ENCODE measurements at regions of chr16 and their contacts with region 1.

Region 1: DNA sequence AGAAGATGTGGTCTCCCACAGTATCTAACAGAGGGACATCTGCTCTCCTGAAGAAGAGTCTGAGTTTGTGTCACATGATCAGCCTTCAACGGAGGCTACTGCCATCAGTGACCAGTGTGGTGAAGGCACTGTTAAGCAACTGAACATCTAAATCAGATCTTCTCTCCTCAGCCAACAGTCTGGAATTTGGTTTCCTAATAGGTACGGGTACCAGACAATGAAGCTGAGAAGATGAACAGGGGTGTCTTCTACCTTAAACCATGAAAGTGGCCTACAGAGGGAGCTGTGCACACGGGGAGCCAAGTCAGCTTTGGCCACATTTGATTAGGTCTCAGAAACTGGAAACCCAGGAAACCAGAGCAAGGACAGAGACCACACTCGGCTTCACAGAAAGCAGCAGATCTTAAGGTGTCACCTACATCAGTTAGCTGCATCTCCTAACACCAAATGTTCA is 41.8 kb downstream of the BRD7 start:
- DNase-seq: peak; percentile 54
- H3K4me3 Mint-ChIP-seq: no peak overlapping the region
- H3K27ac Mint-ChIP-seq: no peak overlapping the region
- H3K4me1 Mint-ChIP-seq: no peaks in the 10 kb centered on the region
- H3K27me3 Mint-ChIP-seq: no peaks in the 10 kb centered on the region
- CTCF ChIP-seq: peak; percentile 29

Region 2: GRCh38 chr16:50185005-50185505 is 141.9 kb before region 1 on chr16:
- CTCF ChIA-PET with region 1: no interaction called
- POLR2A ChIA-PET with region 1: no interaction called
- intact Hi-C with region 1: no loop called
- DNase-seq: no peak
- H3K4me3 Mint-ChIP-seq: no peak overlapping the region
- H3K27ac Mint-ChIP-seq: no peak overlapping the region
- H3K4me1 Mint-ChIP-seq: peaks cover 27% of the 10 kb centered on the region
- H3K27me3 Mint-ChIP-seq: no peaks in the 10 kb centered on the region
- CTCF ChIP-seq: no peak

Region 3: GRCh38 chr16:50313596-50314478 is 13.1 kb before region 1 on chr16:
- CTCF ChIA-PET with region 1: interaction called, 10 read pairs
- POLR2A ChIA-PET with region 1: interaction called, 3 read pairs
- intact Hi-C with region 1: no loop called
- DNase-seq: no peak
- H3K4me3 Mint-ChIP-seq: no peak overlapping the region
- H3K27ac Mint-ChIP-seq: no peak overlapping the region
- H3K4me1 Mint-ChIP-seq: peaks cover 7% of the 10 kb centered on the region
- H3K27me3 Mint-ChIP-seq: no peaks in the 10 kb centered on the region
- CTCF ChIP-seq: no peak

Region 4: GRCh38 chr16:50354629-50355456 is 27.9 kb after region 1 on chr16:
- CTCF ChIA-PET with region 1: interaction called, 12 read pairs
- POLR2A ChIA-PET with region 1: interaction called, 3 read pairs
- intact Hi-C with region 1: no loop called
- DNase-seq: no peak
- H3K4me3 Mint-ChIP-seq: no peak overlapping the region
- H3K27ac Mint-ChIP-seq: no peak overlapping the region
- H3K4me1 Mint-ChIP-seq: peaks cover 5% of the 10 kb centered on the region
- H3K27me3 Mint-ChIP-seq: no peaks in the 10 kb centered on the region
- CTCF ChIP-seq: peak; percentile 49

Region 5: GRCh38 chr16:50437769-50438437 is 110.9 kb after region 1 on chr16:
- CTCF ChIA-PET with region 1: no interaction called
- POLR2A ChIA-PET with region 1: no interaction called
- intact Hi-C with region 1: no loop called
- DNase-seq: no peak
- H3K4me3 Mint-ChIP-seq: no peak overlapping the region
- H3K27ac Mint-ChIP-seq: no peak overlapping the region
- H3K4me1 Mint-ChIP-seq: no peaks in the 10 kb centered on the region
- H3K27me3 Mint-ChIP-seq: peaks cover 8% of the 10 kb centered on the region
- CTCF ChIP-seq: no peak